Common myeloid progenitor, CD34-positive (primary cell): ENCODE measurements at regions of chr12 and their contacts with region 1.

Region 1: DNA sequence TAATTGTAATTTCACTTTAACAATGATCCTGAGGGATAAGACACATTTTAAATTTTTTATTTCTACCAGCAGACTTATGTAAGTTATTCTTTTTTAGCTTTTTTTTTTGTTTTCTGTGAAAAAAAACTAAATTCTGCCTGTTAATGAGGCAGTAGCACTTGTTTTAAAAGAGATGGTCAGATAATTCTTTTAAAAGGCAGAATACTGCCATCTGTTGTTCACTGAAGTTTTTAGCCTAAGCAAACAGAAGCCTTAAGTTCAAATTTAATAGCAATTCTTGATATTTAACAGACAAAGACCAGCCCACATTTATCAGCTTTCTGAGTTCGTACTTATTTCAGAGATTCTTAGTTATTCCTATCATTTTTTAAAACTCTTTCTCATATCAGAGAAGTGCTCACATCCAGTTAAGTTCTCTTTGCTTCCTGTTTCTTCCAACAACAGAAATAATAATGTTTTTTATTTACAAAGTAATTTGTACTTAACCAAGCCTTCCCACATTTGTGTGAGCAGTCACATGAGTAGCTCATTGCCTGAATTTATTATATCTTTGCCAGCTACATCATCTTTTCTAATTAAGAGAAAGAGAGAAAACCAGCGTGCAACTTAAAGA is 93.4 kb upstream of the SLCO1C1 start:
- DNase-seq: peak; percentile 22 to 60 (median 56)
- H3K4me3 ChIP-seq: no peak overlapping the region
- H3K27ac ChIP-seq: no peak overlapping the region
- H3K4me1 ChIP-seq: no peaks in the 10 kb centered on the region
- H3K27me3 ChIP-seq: no peaks in the 10 kb centered on the region

Region 2: DNA sequence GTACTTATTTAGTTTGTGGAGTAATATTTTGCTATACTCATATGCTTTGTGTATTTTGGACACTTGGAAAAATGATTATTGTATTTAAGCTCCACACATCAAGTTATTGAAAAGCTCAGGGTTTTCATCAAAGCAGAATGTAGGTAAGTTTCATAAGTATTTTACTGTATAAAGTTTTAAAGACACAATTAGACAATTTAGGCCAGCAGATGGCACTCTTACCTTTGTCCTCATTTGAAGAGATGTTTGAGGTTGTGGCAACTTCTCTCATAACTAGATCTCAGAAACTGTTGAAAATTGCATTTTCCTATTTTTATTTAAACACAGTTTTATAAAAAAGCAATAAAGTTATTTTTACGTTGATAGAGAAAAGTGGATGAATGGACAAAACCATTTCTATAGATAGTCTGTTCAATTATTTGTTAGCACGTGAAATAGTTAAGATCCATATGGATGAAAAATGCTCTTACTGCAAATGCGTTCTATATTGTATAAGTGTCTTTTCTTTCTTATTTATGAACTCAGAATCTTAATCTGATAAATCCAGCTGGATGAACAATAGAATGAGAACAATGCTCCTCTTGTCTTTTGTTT is 862.5 kb before region 1 on chr12:
- CTCF ChIA-PET with region 1: interaction called, 14 read pairs
- POLR2A ChIA-PET with region 1: no interaction called
- DNase-seq: peak; percentile 59 to 82 (median 76)
- H3K4me3 ChIP-seq: no peak overlapping the region
- H3K27ac ChIP-seq: no peak overlapping the region
- H3K4me1 ChIP-seq: no peaks in the 10 kb centered on the region
- H3K27me3 ChIP-seq: no peaks in the 10 kb centered on the region

Region 3: GRCh38 chr12:20483776-20484175 is 118.0 kb before region 1 on chr12:
- CTCF ChIA-PET with region 1: no interaction called
- POLR2A ChIA-PET with region 1: no interaction called
- DNase-seq: no peak
- H3K4me3 ChIP-seq: no peak overlapping the region
- H3K27ac ChIP-seq: no peak overlapping the region
- H3K4me1 ChIP-seq: no peaks in the 10 kb centered on the region
- H3K27me3 ChIP-seq: no peaks in the 10 kb centered on the region

Region 4: DNA sequence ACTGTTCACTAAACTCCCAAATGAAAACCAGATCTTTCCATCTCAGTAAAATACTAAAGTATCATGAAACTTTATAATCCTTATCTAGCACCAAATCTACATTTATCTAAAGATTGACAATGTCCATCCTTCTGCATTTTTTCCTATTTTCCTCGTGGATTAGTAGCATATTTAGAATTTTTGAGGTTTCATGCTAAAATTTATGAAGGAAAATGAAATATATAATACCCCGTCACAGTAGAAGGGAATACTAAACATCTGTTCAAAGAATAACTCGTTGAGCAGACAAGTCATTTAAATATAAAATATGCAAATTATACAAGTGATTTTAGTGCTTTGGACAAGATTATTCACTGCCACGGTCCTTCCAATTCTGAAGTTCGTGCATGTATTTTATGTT is 29.3 kb before region 1 on chr12:
- CTCF ChIA-PET with region 1: no interaction called
- POLR2A ChIA-PET with region 1: no interaction called
- DNase-seq: no peak
- H3K4me3 ChIP-seq: no peak overlapping the region
- H3K27ac ChIP-seq: no peak overlapping the region
- H3K4me1 ChIP-seq: no peaks in the 10 kb centered on the region
- H3K27me3 ChIP-seq: no peaks in the 10 kb centered on the region

Region 5: GRCh38 chr12:20588042-20588441 is 13.7 kb before region 1 on chr12:
- CTCF ChIA-PET with region 1: no interaction called
- POLR2A ChIA-PET with region 1: no interaction called
- DNase-seq: no peak
- H3K4me3 ChIP-seq: no peak overlapping the region
- H3K27ac ChIP-seq: no peak overlapping the region
- H3K4me1 ChIP-seq: no peaks in the 10 kb centered on the region
- H3K27me3 ChIP-seq: no peaks in the 10 kb centered on the region